Transverse colon (tissue), 4 donors: ENCODE measurements at regions of chr22 and their contacts with region 1.

Region 1: DNA sequence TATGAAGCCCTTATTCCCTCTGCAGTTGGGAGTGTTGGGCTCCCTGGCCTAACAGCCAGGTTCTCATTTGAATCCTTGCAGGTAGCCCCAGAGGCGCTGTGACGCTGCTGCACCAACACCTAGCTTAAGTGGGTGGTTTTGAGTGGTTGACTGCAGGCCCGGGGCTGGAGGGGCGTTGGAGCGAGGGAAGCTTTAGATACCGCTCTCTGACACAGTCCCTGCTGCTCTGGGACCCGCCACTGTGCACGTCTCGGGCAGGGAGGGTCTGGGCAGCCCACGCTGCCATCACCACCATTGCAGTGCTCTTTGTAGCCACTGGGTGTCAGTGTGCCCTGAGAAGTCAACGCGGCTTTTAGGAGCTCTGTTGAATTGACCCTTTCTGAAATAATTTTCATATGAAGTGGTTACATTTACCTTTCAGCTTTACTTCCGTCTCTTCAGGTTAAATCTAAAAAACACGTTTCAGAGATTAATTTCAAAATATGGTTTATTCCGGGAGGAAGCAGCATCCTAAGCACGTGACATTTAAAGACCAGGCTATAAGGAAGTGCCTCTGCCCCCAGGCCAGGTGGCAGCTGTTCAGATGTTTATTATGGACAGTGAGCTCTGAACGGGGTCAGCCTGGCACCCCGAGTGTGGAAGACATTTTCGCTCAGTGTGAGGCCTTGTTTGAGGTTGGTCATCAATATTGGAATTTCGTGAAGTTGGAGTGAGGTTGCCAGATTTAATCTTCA is 30.9 kb upstream of the PARVB start:
- DNase-seq: peak; percentile 51
- H3K4me3 ChIP-seq: no peak overlapping the region
- H3K27ac ChIP-seq: no peak overlapping the region
- H3K4me1 ChIP-seq: peaks cover 3 to 4% (median 4%) of the 10 kb centered on the region in 4 donors
- H3K27me3 ChIP-seq: no peaks in the 10 kb centered on the region
- CTCF ChIP-seq: peak; percentile 87 to 98 (median 95)
- EP300 ChIP-seq: no peak
- POLR2A ChIP-seq: no peak

Region 2: GRCh38 chr22:44625981-44626687 is 632.9 kb after region 1 on chr22:
- in situ Hi-C with region 1: loop called (anchors 5 to 10 kb)
- intact Hi-C with region 1: loop called (anchors 5 kb)
- DNase-seq: peak; percentile 76
- H3K4me3 ChIP-seq: no peak overlapping the region
- H3K27ac ChIP-seq: no peak overlapping the region
- H3K4me1 ChIP-seq: no peaks in the 10 kb centered on the region
- H3K27me3 ChIP-seq: peaks cover 3% of the 10 kb centered on the region
- CTCF ChIP-seq: peak; percentile 97 to 100 (median 99)
- EP300 ChIP-seq: no peak
- POLR2A ChIP-seq: no peak

Region 3: GRCh38 chr22:44639001-44639760 is 646.0 kb after region 1 on chr22:
- in situ Hi-C with region 1: loop called in 1 of 4 experiments (anchors 10 kb)
- intact Hi-C with region 1: no loop called
- DNase-seq: no peak
- H3K4me3 ChIP-seq: no peak overlapping the region
- H3K27ac ChIP-seq: peak overlapping the region in 2 of 4 donors; percentile 8 to 28
- H3K4me1 ChIP-seq: peaks cover 0 to 7% (median 0%) of the 10 kb centered on the region in 4 donors
- H3K27me3 ChIP-seq: no peaks in the 10 kb centered on the region
- CTCF ChIP-seq: no peak
- EP300 ChIP-seq: peak; percentile 19
- POLR2A ChIP-seq: no peak